Ascending aorta (tissue), 2 donors: ENCODE measurements at regions of chr20 and their contacts with region 1.

Region 1: GRCh38 chr20:44210422-44211176 is at the start of gene OSER1:
- DNase-seq: peak; percentile 97 to 99
- H3K4me3 ChIP-seq: peak within 1 kb of the TSS; percentile 55 to 78
- H3K27ac ChIP-seq: peak within 1 kb of the TSS; percentile 91 to 96
- H3K4me1 ChIP-seq: peaks cover 0 to 44% of the 10 kb centered on the region in 2 donors
- H3K27me3 ChIP-seq: no peaks in the 10 kb centered on the region
- CTCF ChIP-seq: peak in 1 of 3 experiments; percentile 8
- total RNA-seq, gene OSER1: 9.2 TPM

Region 2: GRCh38 chr20:43456809-43457639 is 753.6 kb before region 1 on chr20:
- intact Hi-C with region 1: loop called (anchors 5 kb)
- DNase-seq: peak; percentile 78 to 96
- H3K4me3 ChIP-seq: peak overlapping the region; percentile 90 to 91
- H3K27ac ChIP-seq: peak overlapping the region; percentile 99 to 100
- H3K4me1 ChIP-seq: peaks cover 4 to 17% of the 10 kb centered on the region in 2 donors
- H3K27me3 ChIP-seq: no peaks in the 10 kb centered on the region
- CTCF ChIP-seq: no peak

Region 3: DNA sequence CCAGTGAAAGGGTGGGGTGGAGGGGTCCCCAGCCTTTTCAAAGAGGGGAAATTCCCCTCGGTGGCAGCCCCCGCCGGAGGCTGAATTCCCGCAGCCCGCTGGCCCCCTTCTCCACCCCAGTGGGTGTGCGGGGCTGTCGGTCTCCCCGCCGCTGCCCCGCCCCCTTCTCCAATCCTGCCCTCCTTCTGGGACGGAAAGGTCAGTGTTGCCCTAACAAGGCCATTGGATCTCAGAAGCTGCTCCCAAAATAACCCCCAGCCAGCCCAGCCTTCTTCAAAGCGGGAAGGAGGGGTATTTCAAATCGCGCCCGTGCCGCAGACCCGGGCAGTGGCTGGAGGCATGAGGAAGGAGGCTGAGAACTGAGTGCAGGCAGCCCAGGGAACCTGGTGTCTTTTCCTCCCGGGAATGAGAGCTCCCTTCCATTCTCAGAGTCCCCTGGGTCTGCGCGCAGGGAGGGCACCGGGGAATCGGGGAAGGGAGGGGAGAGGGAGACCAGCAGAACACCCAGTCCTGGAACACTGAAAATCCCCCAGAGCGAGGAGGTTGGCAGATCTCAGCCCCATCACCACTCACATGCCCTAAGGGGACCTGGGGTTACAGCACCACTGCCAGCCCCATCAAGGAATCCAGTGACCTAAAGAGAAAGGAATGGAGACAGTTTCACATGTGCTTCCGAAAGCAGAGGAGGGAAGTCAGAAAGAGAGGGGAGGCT is 23.4 kb before region 1 on chr20 and contains the start of gene JPH2:
- intact Hi-C with region 1: loop called (anchors 2 kb)
- DNase-seq: peak; percentile 60 to 90
- H3K4me3 ChIP-seq: peak within 1 kb of the TSS; percentile 61 to 82
- H3K27ac ChIP-seq: peak within 1 kb of the TSS; percentile 89 to 95
- H3K4me1 ChIP-seq: peaks cover 11 to 14% of the 10 kb centered on the region in 2 donors
- H3K27me3 ChIP-seq: no peaks in the 10 kb centered on the region
- CTCF ChIP-seq: no peak
- total RNA-seq, gene JPH2: 86.7 TPM

Region 4: DNA sequence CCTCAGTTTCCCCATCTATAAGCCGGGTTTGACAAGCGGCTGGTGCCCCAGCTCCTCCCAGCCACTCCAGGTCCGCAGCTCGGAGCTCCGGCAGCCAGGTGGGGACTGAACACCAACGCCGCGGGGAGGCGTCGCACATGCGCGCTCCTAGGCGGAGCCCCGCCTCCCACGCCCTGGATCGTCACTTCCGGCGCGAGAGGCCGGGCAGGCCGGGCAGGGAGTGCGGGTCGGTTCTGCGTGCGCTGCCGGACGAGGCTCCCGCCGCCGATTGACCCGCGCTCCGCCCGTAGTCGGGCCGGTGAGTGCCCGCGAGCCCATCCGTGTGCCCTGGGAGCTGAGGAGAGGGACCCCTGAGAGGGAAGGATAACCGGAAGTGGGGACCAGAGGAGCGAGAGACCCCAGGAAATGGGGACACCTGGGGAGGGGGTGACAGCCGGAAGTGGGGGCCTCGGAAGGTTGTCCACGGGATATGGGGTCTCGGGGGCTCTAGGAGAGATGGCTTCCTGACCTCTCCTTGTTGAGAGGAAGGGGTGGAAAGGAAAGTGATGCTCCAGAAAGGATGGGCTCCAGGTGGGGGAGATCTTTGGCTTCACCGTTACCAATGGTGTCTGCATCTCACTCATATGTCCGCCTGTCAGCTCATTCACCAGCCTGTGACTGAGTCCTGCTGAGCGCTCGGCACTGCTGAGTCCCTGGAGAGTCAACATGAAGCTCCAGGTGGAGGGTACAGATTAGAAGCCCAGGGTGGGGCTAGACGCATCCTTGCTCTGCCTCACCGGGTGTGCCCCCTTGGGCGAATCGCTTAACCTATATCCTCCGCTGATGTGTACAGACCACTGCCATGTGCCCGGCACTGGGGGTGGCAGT is 265.3 kb after region 1 on chr20 and contains the start of gene TTPAL:
- intact Hi-C with region 1: loop called (anchors 5 kb)
- DNase-seq: peak; percentile 50 to 94
- H3K4me3 ChIP-seq: peak within 1 kb of the TSS; percentile 74 to 84
- H3K27ac ChIP-seq: peak within 1 kb of the TSS; percentile 94 to 97
- H3K4me1 ChIP-seq: peaks cover 5 to 6% of the 10 kb centered on the region in 2 donors
- H3K27me3 ChIP-seq: no peaks in the 10 kb centered on the region
- CTCF ChIP-seq: peak in 2 of 3 experiments; percentile 25 to 60
- total RNA-seq, gene TTPAL: 44.9 TPM

Region 5: DNA sequence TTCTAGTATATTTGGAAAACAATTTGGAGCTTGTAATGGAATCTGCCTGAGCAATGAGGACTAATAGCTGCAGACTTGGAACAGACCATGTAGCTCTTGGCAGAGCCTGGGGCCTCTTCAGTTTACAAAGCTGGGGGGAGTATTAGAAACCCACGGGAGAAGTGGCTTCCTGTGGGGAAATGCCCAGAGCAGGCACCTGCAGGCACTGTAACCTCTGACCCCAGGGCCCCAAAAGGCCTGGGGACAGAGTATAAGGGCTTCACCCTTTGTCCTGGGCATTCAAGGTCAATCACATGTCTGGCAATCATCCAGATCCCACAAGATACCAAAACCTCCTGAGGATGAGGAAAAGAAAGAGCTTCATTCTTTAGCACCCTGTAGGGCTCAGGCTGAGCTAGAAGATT is 391.2 kb after region 1 on chr20:
- intact Hi-C with region 1: loop called (anchors 5 kb)
- DNase-seq: peak in 1 of 2 donors; percentile 92
- H3K4me3 ChIP-seq: no peak overlapping the region
- H3K27ac ChIP-seq: peak overlapping the region; percentile 97
- H3K4me1 ChIP-seq: peaks cover 37 to 62% of the 10 kb centered on the region in 2 donors
- H3K27me3 ChIP-seq: no peaks in the 10 kb centered on the region
- CTCF ChIP-seq: no peak

Region 6: DNA sequence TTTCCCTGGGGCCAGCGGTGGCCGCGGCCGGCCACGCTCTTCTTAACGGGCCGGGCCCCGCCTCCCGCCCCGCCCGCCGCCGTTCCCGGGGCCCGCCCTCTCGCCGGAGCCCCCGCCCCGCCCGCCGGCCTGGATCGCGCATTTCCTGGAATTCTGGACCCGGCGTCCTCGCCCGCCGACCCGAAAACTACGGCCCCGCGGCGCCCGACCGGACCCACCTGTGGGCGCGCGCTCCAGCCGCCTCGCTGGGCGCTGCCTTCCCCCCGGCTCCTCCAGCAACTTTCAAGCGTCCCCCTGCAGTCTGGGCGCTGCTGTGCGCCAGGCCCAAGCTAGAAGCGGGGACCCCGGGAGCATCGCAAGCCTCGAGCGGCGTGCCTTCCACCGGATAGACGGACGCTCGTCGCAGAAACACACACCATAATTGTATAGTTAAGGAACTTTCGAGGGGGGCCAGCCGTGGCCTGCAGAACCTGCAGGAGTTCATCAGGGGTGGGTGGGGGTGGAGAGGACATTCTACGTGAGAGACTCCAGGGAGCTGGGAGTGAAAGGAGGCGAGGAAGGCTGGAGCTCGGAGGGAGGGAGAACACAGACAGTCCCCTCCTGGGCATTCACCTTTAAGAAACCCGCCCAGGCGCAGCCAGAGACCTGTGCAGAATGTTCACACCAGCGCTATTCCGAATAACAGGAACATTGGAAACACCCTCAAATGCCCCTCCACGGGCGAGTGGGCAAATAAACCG is 441.3 kb after region 1 on chr20 and contains the start of gene ADA:
- intact Hi-C with region 1: no loop called
- DNase-seq: peak in 1 of 2 donors; percentile 77
- H3K4me3 ChIP-seq: peak within 1 kb of the TSS; percentile 84 to 96
- H3K27ac ChIP-seq: peak within 1 kb of the TSS; percentile 58 to 73
- H3K4me1 ChIP-seq: peaks cover 2 to 6% of the 10 kb centered on the region in 2 donors
- H3K27me3 ChIP-seq: no peaks in the 10 kb centered on the region
- CTCF ChIP-seq: no peak
- total RNA-seq, gene ADA: 0.75 TPM

Region 7: GRCh38 chr20:44738813-44739477 is 528.3 kb after region 1 on chr20:
- intact Hi-C with region 1: loop called (anchors 5 kb)
- DNase-seq: peak in 1 of 2 donors; percentile 89
- H3K4me3 ChIP-seq: no peak overlapping the region
- H3K27ac ChIP-seq: peak overlapping the region; percentile 73 to 94
- H3K4me1 ChIP-seq: peaks cover 5 to 45% of the 10 kb centered on the region in 2 donors
- H3K27me3 ChIP-seq: no peaks in the 10 kb centered on the region
- CTCF ChIP-seq: no peak

Region 8: DNA sequence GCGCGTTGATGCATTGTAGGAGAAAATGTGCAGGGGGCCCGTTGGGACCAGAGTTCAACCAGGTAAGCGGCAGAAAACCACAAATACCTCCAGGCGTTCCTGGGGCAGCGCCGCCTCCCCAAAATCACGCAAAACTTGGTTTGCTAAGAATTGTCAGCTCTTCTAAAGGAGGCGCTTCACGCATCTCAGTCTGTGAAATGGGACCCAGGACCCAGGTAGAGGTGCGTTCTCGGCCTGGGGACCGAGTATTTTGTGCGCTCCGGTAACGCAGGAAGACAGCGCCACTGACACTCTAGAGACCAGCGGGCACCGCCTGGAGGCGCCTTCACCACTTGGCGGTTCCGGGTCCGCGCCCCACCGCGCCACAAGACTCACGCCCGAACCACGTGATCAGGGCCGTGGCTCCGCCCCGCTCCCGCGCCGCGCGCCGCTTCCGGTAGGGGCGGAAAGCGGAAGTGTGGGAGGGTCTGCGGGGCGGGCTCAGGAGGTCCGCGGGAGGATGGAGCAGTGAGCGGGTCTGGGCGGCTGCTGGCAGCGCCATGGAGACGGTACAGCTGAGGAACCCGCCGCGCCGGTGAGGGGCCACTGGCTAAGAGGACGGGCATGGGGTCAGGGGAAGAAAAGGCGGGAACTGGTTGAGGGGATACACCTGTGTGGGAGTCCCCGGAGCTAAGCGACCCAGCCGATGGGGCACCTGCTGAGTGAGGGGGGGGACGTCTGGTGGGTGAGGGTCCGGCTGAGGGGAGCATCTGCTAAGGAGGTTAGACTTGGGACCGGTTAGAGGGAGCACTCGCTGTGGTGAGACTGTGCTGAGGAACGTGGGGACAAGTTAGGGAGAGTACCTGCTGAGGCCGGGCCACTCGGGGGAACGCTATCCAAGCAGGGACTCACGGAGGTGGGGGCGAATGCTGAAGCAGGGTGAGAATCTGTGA is 755.7 kb after region 1 on chr20 and contains the start of gene STK4:
- intact Hi-C with region 1: loop called (anchors 10 kb)
- DNase-seq: peak; percentile 76 to 97
- H3K4me3 ChIP-seq: peak within 1 kb of the TSS; percentile 79 to 96
- H3K27ac ChIP-seq: peak within 1 kb of the TSS; percentile 78 to 83
- H3K4me1 ChIP-seq: peaks cover 10 to 11% of the 10 kb centered on the region in 2 donors
- H3K27me3 ChIP-seq: no peaks in the 10 kb centered on the region
- CTCF ChIP-seq: peak; percentile 21 to 60 (median 53)
- total RNA-seq, gene STK4: 20.6 TPM